WTC11 (cell line): ENCODE measurements at regions of chr6 and their contacts with region 1.

Region 1: GRCh38 chr6:37059344-37060206 is 54.1 kb downstream of the FGD2 start:
- DNase-seq: peak; percentile 73
- ATAC-seq: peak; percentile 72
- H3K4me3 Mint-ChIP-seq: peak overlapping the region; percentile 47
- H3K27ac Mint-ChIP-seq: peak overlapping the region; percentile 99
- H3K4me1 Mint-ChIP-seq: peaks cover 51% of the 10 kb centered on the region
- H3K27me3 Mint-ChIP-seq: no peaks in the 10 kb centered on the region
- CTCF ChIP-seq: 0 out of 2 replicates have a peak, but pooled peaks have one; percentile 21

Region 2: GRCh38 chr6:37072526-37072925 is 13.0 kb after region 1 on chr6:
- CTCF ChIA-PET with region 1: interaction called, 10 read pairs
- POLR2A ChIA-PET with region 1: interaction called, 3 read pairs
- DNase-seq: no peak
- ATAC-seq: peak; percentile 9
- H3K4me3 Mint-ChIP-seq: no peak overlapping the region
- H3K27ac Mint-ChIP-seq: peak overlapping the region; percentile 93
- H3K4me1 Mint-ChIP-seq: peaks cover 47% of the 10 kb centered on the region
- H3K27me3 Mint-ChIP-seq: no peaks in the 10 kb centered on the region
- CTCF ChIP-seq: no peak

Region 3: GRCh38 chr6:37125783-37126492 is 66.4 kb after region 1 on chr6:
- CTCF ChIA-PET with region 1: interaction called, 10 read pairs
- POLR2A ChIA-PET with region 1: interaction called, 6 read pairs
- DNase-seq: peak; percentile 80
- ATAC-seq: peak; percentile 77
- H3K4me3 Mint-ChIP-seq: peak overlapping the region; percentile 73
- H3K27ac Mint-ChIP-seq: peak overlapping the region; percentile 100
- H3K4me1 Mint-ChIP-seq: peaks cover 85% of the 10 kb centered on the region
- H3K27me3 Mint-ChIP-seq: no peaks in the 10 kb centered on the region
- CTCF ChIP-seq: no peak

Region 4: GRCh38 chr6:37396476-37397180 is 337.1 kb after region 1 on chr6:
- CTCF ChIA-PET with region 1: no interaction called
- POLR2A ChIA-PET with region 1: no interaction called
- DNase-seq: no peak
- ATAC-seq: no peak
- H3K4me3 Mint-ChIP-seq: no peak overlapping the region
- H3K27ac Mint-ChIP-seq: no peak overlapping the region
- H3K4me1 Mint-ChIP-seq: no peaks in the 10 kb centered on the region
- H3K27me3 Mint-ChIP-seq: peaks cover 5% of the 10 kb centered on the region; the same call in 1 of the 2 replicates
- CTCF ChIP-seq: no peak